ENCODE measurements at regions of chr19 and their contacts with region 1.

Region 1: GRCh38 chr19:50777754-50778303 is 7.6 kb downstream of the GPR32 start:
- DNase-seq: peak; percentile 49
- ATAC-seq: no peak
- H3K4me3 Mint-ChIP-seq: no peak overlapping the region
- H3K27ac Mint-ChIP-seq: no peak overlapping the region
- H3K4me1 Mint-ChIP-seq: peaks cover 6% of the 10 kb centered on the region
- H3K27me3 Mint-ChIP-seq: peaks cover 59% of the 10 kb centered on the region

Region 2: DNA sequence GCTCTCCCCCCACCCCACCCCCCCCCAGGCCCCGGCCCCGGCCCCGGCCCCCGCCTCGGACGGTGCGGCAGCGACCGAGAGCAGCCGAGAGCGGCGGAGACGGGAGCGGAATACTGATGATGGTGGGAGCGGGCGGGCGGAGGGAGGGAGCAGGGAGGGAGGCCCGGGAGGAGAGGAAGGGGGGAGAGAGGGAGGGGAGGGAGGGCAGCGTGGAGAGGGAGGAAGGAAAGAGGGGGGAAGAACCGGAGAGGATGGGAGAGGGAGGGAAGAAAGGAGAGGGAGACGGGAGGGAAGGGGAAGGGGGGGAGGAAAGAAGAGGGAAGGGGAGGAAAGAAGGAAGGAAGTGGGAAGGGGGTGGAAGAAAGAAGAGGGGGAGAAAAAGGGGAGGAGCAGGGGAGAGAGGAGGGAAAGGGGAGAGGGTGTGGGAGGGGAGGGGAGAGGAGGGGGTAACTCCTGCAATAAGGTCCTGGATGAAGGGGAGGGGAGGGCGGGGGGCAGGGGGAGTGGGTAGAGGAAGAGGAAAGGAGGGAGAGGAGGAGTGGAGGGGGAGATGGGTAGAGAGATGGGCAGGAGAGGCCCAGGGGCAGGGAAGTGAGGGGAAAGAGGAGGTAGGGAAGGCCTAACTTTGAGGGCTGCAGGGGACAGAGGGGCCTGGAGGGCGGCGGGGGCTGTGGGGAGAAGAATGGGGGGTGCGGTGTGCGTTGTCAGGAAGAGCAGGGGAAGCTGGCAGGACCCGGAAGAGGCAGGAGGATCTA is 209.3 kb before region 1 on chr19 and contains the start of gene LRRC4B:
- CTCF ChIA-PET with region 1: no interaction called
- POLR2A ChIA-PET with region 1: no interaction called
- intact Hi-C with region 1: no loop called
- DNase-seq: no peak
- ATAC-seq: no peak
- H3K4me3 Mint-ChIP-seq: no peak within 1 kb of the TSS
- H3K27ac Mint-ChIP-seq: no peak within 1 kb of the TSS
- H3K4me1 Mint-ChIP-seq: peaks cover 20% of the 10 kb centered on the region
- H3K27me3 Mint-ChIP-seq: peaks cover 37% of the 10 kb centered on the region
- total RNA-seq, gene LRRC4B: not detected

Region 3: DNA sequence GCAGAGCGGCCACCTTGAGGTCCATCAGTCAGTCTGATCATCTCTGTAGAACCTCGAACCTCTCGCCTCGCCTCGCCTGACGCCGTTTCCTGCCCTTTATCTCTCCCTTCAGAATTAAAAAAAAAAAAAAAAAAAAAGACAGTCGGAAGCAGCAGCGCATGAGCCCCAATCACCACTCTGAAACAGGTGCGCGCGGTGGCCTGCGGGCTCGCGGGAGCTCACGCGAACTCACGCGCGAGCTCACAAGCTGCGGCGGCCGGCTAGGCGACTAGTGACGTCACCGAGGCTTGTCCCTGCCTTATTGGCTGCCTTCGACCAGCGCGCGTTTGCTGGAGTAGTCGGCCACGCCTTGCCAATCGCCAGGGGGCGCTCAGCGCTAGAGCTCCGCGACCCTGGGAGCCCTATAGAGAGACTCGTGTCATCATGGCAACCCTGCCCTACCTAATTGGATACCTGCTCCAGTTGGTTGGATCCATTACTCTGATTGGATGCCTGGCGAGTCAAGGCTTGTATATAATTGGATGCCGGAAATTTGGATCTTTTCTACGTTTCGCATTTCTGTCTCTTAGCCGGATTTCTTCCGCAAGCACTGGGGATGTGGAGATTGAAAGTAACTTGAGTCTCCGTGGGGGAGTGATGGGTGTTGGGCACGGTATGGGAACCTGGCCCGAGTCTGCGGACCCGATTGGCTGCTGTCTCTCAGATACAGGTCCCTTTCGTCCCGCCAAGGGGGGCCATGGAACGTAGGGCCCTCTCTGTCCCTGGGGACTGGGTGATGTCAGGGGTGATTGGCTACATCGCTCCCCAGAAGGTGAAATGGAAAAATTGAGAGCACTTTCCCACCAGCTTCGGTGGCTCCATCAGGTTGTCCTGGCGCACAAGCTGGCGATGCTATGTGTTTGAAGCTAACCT is 169.7 kb before region 1 on chr19:
- CTCF ChIA-PET with region 1: interaction called, 5 read pairs
- POLR2A ChIA-PET with region 1: no interaction called
- intact Hi-C with region 1: loop called (anchors 1 to 5 kb)
- DNase-seq: peak; percentile 95
- ATAC-seq: peak; percentile 93
- H3K4me3 Mint-ChIP-seq: peak overlapping the region; percentile 5
- H3K27ac Mint-ChIP-seq: no peak overlapping the region
- H3K4me1 Mint-ChIP-seq: peaks cover 13% of the 10 kb centered on the region
- H3K27me3 Mint-ChIP-seq: peaks cover 35% of the 10 kb centered on the region

Region 4: DNA sequence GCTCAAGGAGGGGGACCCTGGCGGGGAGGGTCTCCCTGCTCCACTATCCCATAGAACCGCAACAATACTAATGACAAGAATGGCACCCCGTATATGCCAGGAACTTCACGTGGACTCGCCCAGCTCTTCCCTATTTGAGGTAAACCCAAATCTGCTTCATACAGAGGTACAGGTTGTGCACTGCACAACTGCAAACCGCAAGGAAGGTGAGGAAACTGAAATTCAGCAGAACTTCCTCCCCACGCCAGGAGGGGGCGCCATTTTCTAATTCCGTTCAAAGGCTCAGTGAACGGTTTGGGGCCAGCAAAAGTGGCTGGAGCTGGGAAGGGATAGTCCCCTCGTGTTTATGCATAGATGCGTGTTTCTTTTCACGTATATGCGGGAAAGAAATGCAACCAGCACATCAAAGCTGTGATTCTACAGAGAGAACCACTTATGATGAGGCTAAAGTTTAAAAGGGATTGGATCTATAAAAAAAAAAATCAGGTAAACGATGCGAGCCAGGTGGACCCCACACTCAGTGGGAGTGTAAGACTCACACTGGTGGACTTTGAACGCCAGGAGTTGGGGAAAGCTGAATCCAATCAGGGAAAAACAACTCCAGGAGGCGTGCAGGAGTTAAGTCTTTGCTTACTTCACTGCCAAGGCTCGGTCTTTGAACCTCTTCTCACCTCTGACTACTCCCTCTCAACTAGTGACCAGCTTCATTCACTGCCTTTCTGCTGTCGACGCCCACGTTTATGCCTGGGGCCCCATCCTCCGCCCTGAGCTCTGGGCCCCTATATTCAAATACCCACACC is 108.3 kb before region 1 on chr19:
- CTCF ChIA-PET with region 1: interaction called, 3 read pairs
- POLR2A ChIA-PET with region 1: no interaction called
- intact Hi-C with region 1: loop called (anchors 1 to 10 kb)
- DNase-seq: peak; percentile 71
- ATAC-seq: no peak
- H3K4me3 Mint-ChIP-seq: no peak overlapping the region
- H3K27ac Mint-ChIP-seq: no peak overlapping the region
- H3K4me1 Mint-ChIP-seq: no peaks in the 10 kb centered on the region
- H3K27me3 Mint-ChIP-seq: peaks cover 40% of the 10 kb centered on the region

Region 5: GRCh38 chr19:50705422-50706019 is 72.3 kb before region 1 on chr19:
- CTCF ChIA-PET with region 1: no interaction called
- POLR2A ChIA-PET with region 1: no interaction called
- intact Hi-C with region 1: loop called (anchors 1 to 2 kb)
- DNase-seq: peak; percentile 60
- ATAC-seq: peak; percentile 92
- H3K4me3 Mint-ChIP-seq: no peak overlapping the region
- H3K27ac Mint-ChIP-seq: no peak overlapping the region
- H3K4me1 Mint-ChIP-seq: no peaks in the 10 kb centered on the region
- H3K27me3 Mint-ChIP-seq: peaks cover 20% of the 10 kb centered on the region

Region 6: GRCh38 chr19:50933640-50934039 is 155.8 kb after region 1 on chr19:
- CTCF ChIA-PET with region 1: no interaction called
- POLR2A ChIA-PET with region 1: no interaction called
- intact Hi-C with region 1: no loop called
- DNase-seq: no peak
- ATAC-seq: no peak
- H3K4me3 Mint-ChIP-seq: no peak overlapping the region
- H3K27ac Mint-ChIP-seq: no peak overlapping the region
- H3K4me1 Mint-ChIP-seq: no peaks in the 10 kb centered on the region
- H3K27me3 Mint-ChIP-seq: peaks cover 30% of the 10 kb centered on the region

Measured in activated CD4-positive, alpha-beta T cell treated with anti-CD3 and anti-CD28 coated beads for 36 hours (primary cell).